Activated CD8-positive, alpha-beta memory T cell treated with anti-CD3 and anti-CD28 coated beads, Interleukin-2, amount 10 ng/mL, durations not matched to agents 7 days and 5 days (primary cell): ENCODE measurements at regions of chr4 and their contacts with region 1.

Region 1: GRCh38 chr4:53908661-53909078 is 155.7 kb downstream of the CHIC2 start:
- DNase-seq: no peak
- ATAC-seq: peak; percentile 55
- H3K4me3 Mint-ChIP-seq: no peak overlapping the region
- H3K27ac Mint-ChIP-seq: no peak overlapping the region
- H3K4me1 Mint-ChIP-seq: peaks cover 11% of the 10 kb centered on the region
- H3K27me3 Mint-ChIP-seq: peaks cover 61% of the 10 kb centered on the region

Region 2: GRCh38 chr4:54217642-54218495 is 309.2 kb after region 1 on chr4:
- CTCF ChIA-PET with region 1: interaction called, 19 read pairs
- DNase-seq: peak; percentile 61
- ATAC-seq: peak; percentile 78
- H3K4me3 Mint-ChIP-seq: no peak overlapping the region
- H3K27ac Mint-ChIP-seq: no peak overlapping the region
- H3K4me1 Mint-ChIP-seq: peaks cover 4% of the 10 kb centered on the region
- H3K27me3 Mint-ChIP-seq: peaks cover 39% of the 10 kb centered on the region